ENCODE measurements at regions of chr1 and their contacts with region 1.

Region 1: GRCh38 chr1:19010995-19011844 is 54.7 kb upstream of the IFFO2 start:
- DNase-seq: peak; percentile 22 to 66 (median 46)
- H3K4me3 ChIP-seq: no peak overlapping the region
- H3K27ac ChIP-seq: peak overlapping the region in 1 of 2 donors; percentile 5
- H3K4me1 ChIP-seq: peaks cover 2% of the 10 kb centered on the region
- H3K27me3 ChIP-seq: no peaks in the 10 kb centered on the region
- CTCF ChIP-seq: no peak
- EP300 ChIP-seq: no peak
- POLR2A ChIP-seq: no peak

Region 2: DNA sequence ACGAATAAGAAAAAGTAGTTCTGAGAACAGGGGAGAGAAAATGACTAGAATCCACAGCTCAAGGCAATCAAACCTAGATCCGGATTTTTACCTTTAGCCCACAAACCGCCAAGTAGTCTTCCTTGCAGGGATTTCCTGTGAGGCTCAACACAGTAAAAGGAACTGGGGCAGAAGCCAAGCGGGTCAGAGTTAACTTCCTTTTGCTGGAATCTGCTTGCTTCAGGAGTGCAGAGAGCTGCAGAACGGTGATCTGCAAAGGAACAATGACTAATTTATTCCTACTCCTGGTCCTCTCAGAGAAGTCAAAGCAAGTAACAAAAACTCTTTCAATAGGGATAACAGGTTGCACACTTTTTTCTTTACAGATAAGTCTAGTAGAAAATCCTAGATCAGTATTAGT is 145.5 kb after region 1 on chr1:
- intact Hi-C with region 1: no loop called
- DNase-seq: peak in 1 of 5 donors; percentile 43
- H3K4me3 ChIP-seq: no peak overlapping the region
- H3K27ac ChIP-seq: no peak overlapping the region
- H3K4me1 ChIP-seq: no peaks in the 10 kb centered on the region
- H3K27me3 ChIP-seq: no peaks in the 10 kb centered on the region
- CTCF ChIP-seq: no peak
- EP300 ChIP-seq: no peak
- POLR2A ChIP-seq: no peak

Region 3: DNA sequence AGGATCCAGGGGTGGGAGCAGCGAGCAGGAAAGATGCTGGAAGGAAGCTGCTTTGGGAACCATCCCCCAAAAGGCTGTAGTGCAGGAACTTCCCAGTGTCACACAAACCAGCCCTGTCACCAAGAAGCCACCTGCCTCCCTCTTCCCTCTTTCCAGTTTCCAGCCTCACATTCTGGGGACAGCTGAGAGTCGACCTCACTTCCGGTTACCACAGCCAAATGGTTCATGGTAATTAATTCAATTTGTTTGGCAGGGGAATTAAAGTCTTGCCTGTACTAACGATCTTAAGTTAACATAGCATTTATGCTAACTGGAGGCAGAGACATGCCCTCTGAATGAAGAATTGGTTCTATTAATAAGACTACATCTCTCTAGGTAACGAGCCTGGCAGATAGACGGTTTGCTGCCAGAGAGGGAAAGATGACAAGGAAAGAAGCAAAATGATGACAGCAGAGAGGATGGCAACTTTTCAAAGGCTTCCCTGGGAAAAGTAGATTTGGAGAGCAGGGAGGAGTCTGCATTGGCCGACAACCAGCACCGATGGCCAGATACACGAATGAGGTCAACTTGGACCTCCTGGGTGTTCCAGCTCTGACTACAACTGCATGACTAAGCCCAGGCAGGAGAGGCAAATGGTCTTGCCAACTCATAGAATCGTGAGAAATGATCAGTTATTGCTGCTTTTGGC is 724.4 kb after region 1 on chr1:
- intact Hi-C with region 1: loop called in 1 of 4 experiments (anchors 5 kb)
- DNase-seq: peak in 2 of 5 donors; percentile 30 to 55
- H3K4me3 ChIP-seq: no peak overlapping the region
- H3K27ac ChIP-seq: no peak overlapping the region
- H3K4me1 ChIP-seq: no peaks in the 10 kb centered on the region
- H3K27me3 ChIP-seq: no peaks in the 10 kb centered on the region
- CTCF ChIP-seq: no peak
- EP300 ChIP-seq: no peak
- POLR2A ChIP-seq: no peak